ENCODE measurements at regions of chr2 and their contacts with region 1.

Region 1: GRCh38 chr2:106085181-106085940 is 108.7 kb downstream of the UXS1 start:
- DNase-seq: peak in 7 of 9 donors; percentile 57 to 76 (median 70)
- ATAC-seq: peak; percentile 90
- H3K4me3 ChIP-seq: peak overlapping the region; percentile 6
- H3K4me3 Mint-ChIP-seq: peak overlapping the region; percentile 47 to 83 (median 69)
- H3K27ac ChIP-seq: peak overlapping the region; percentile 64
- H3K27ac Mint-ChIP-seq: peak overlapping the region; percentile 79 to 97 (median 93)
- H3K4me1 ChIP-seq: peaks cover 37 to 59% of the 10 kb centered on the region in 2 donors
- H3K4me1 Mint-ChIP-seq: peaks cover 27 to 97% (median 76%) of the 10 kb centered on the region in 7 donors
- H3K27me3 ChIP-seq: no peaks in the 10 kb centered on the region
- H3K27me3 Mint-ChIP-seq: peaks cover 0 to 6% (median 0%) of the 10 kb centered on the region in 5 donors

Region 2: DNA sequence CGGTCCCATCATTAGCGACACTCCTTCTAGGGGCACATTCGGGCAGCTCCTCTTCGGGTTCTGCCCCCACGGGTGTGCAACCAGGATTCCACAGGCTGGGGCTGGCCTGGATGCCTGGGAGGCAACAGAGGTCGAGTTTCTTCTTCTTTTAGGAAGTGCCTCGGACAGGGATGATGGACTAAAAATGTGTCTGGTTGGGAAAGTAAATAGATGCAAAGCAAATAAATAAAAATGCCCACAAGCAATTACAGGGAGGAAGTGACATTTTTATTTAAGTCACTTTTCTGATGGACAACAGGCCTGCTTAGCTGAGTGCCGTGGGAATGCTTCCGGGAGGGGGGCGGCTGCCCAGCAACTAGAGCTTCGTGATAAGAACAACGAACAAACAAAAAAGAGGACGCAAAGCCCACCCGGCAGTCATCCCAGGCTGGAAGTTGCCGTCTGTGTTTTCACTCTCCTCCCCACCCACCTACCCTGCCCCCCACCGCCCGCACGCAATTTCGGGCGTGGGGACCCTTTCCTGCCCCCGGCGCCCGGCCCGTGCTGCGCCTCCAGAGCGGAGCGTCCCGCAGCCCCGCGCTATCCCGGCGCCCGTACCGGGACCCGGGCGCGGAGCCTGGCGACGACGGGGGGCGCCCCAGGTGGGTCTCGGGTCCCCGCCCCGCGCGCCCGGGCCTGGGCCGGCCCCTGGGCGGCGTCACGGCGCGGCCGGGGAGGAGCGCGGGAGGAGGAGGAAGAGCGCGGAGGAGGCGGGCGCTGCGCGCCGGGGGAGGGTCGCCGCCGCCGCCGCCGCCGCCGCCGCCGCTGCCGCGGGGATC is 341.1 kb before region 1 on chr2:
- CTCF ChIA-PET with region 1: interaction called, 3 read pairs
- POLR2A ChIA-PET with region 1: interaction called, 7 read pairs
- intact Hi-C with region 1: loop called in 1 of 2 experiments (anchors 1 kb)
- DNase-seq: peak; percentile 57 to 79 (median 69)
- ATAC-seq: peak; percentile 87
- H3K4me3 ChIP-seq: peak overlapping the region; percentile 24
- H3K4me3 Mint-ChIP-seq: peak overlapping the region; percentile 76 to 96 (median 90)
- H3K27ac ChIP-seq: peak overlapping the region; percentile 80
- H3K27ac Mint-ChIP-seq: peak overlapping the region; percentile 90 to 96 (median 95)
- H3K4me1 ChIP-seq: peaks cover 48 to 54% of the 10 kb centered on the region in 2 donors
- H3K4me1 Mint-ChIP-seq: peaks cover 49 to 82% (median 77%) of the 10 kb centered on the region in 7 donors
- H3K27me3 ChIP-seq: no peaks in the 10 kb centered on the region
- H3K27me3 Mint-ChIP-seq: no peaks in the 10 kb centered on the region

Region 3: DNA sequence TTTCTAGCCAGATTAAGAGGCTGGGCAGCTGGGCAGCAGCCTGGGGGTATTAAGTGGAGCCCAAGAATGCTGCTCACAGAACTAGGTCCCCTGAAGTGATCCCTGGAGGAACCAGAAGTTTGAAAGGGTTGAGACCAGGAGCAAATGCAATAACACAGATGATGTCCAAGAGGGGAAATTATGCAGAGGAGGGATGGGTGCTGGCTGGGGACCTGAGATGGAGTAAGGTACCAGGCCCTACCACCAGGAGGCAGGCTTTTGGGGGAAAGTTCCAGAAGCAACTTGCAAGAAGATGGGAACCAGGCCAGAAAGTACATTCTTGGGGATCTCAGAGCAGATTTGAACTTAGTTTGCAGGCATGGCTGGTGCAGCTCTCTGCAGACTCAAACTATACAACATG is 165.5 kb before region 1 on chr2:
- CTCF ChIA-PET with region 1: interaction called, 6 read pairs
- POLR2A ChIA-PET with region 1: no interaction called
- intact Hi-C with region 1: loop called (anchors 1 kb)
- DNase-seq: peak in 6 of 9 donors; percentile 33 to 52 (median 43)
- ATAC-seq: peak; percentile 40
- H3K4me3 ChIP-seq: no peak overlapping the region
- H3K4me3 Mint-ChIP-seq: peak overlapping the region in 2 of 10 donors; percentile 6 to 29
- H3K27ac ChIP-seq: no peak overlapping the region
- H3K27ac Mint-ChIP-seq: peak overlapping the region in 4 of 9 donors; percentile 8 to 68 (median 36)
- H3K4me1 ChIP-seq: peaks cover 0 to 26% of the 10 kb centered on the region in 2 donors
- H3K4me1 Mint-ChIP-seq: peaks cover 13 to 72% (median 65%) of the 10 kb centered on the region in 7 donors
- H3K27me3 ChIP-seq: no peaks in the 10 kb centered on the region
- H3K27me3 Mint-ChIP-seq: no peaks in the 10 kb centered on the region

Region 4: DNA sequence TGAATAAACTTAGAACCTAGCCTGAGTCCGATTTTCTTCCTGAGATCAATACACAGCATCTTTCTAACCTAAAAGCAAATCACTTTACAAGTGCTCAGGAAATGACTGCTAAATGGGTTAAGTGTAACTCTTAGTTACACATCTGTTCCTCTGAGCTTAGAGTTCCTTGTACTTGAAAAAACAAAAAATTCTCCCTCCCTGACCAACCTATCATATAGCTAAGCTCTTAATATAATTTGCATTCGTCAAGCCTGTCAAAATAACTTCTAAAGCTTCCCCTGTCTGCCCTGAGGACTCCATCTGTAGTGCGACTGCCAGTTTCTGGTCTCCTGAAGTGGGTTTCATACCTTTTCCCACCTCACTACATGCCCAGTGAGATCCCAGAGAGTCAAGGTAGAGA is 150.3 kb before region 1 on chr2:
- CTCF ChIA-PET with region 1: interaction called, 6 read pairs
- POLR2A ChIA-PET with region 1: interaction called, 5 read pairs
- intact Hi-C with region 1: loop called in 1 of 2 experiments (anchors 1 kb)
- DNase-seq: peak in 7 of 9 donors; percentile 40 to 73 (median 62)
- ATAC-seq: peak; percentile 86
- H3K4me3 ChIP-seq: peak overlapping the region; percentile 19
- H3K4me3 Mint-ChIP-seq: no peak overlapping the region
- H3K27ac ChIP-seq: peak overlapping the region; percentile 68
- H3K27ac Mint-ChIP-seq: no peak overlapping the region
- H3K4me1 ChIP-seq: peaks cover 39 to 54% of the 10 kb centered on the region in 2 donors
- H3K4me1 Mint-ChIP-seq: peaks cover 9 to 40% (median 30%) of the 10 kb centered on the region in 7 donors
- H3K27me3 ChIP-seq: no peaks in the 10 kb centered on the region
- H3K27me3 Mint-ChIP-seq: no peaks in the 10 kb centered on the region

Region 5: GRCh38 chr2:106028192-106028591 is 57.2 kb before region 1 on chr2:
- CTCF ChIA-PET with region 1: no interaction called
- POLR2A ChIA-PET with region 1: no interaction called
- intact Hi-C with region 1: no loop called
- DNase-seq: no peak
- ATAC-seq: peak; percentile 29
- H3K4me3 ChIP-seq: no peak overlapping the region
- H3K4me3 Mint-ChIP-seq: no peak overlapping the region
- H3K27ac ChIP-seq: no peak overlapping the region
- H3K27ac Mint-ChIP-seq: peak overlapping the region in 2 of 9 donors; percentile 4 to 54
- H3K4me1 ChIP-seq: peaks cover 16 to 17% of the 10 kb centered on the region in 2 donors
- H3K4me1 Mint-ChIP-seq: peaks cover 11 to 61% (median 45%) of the 10 kb centered on the region in 7 donors
- H3K27me3 ChIP-seq: no peaks in the 10 kb centered on the region
- H3K27me3 Mint-ChIP-seq: peaks cover 0 to 8% (median 0%) of the 10 kb centered on the region in 5 donors

Region 6: DNA sequence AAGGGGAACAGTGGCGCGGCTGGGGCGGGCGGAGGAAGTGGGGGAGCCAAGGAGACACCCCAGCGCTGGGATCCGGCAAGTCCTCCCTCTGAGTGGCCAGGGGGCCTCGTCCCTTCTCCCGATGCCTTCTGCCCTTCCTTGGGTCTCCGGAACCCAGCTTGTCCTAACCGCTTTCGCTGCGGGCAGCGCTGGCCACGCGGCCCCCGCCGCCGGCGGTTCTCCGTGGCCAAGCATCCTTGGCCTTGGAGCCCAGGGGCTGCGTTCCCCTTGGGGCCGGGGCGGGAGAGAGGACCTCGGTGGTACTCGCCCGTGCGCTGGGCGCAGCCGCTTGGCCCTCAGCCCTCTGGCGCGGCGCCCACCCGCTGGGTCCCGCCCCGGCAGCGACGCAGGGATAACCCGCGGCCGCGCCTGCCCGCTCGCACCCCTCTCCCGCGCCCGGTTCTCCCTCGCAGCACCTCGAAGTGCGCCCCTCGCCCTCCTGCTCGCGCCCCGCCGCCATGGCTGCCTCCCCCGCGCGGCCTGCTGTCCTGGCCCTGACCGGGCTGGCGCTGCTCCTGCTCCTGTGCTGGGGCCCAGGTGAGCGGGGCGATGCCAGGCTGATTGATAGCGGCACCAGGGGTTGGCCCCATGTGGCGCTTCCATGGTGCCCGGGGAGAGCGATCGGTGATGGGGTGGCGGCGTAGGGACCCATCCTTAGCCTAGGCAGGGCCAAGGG is 19.9 kb before region 1 on chr2:
- CTCF ChIA-PET with region 1: interaction called, 4 read pairs
- POLR2A ChIA-PET with region 1: interaction called, 11 read pairs
- intact Hi-C with region 1: no loop called
- DNase-seq: peak in 6 of 9 donors; percentile 17 to 44 (median 34)
- ATAC-seq: peak; percentile 57
- H3K4me3 ChIP-seq: peak overlapping the region; percentile 64
- H3K4me3 Mint-ChIP-seq: peak overlapping the region; percentile 61 to 88 (median 82)
- H3K27ac ChIP-seq: no peak overlapping the region
- H3K27ac Mint-ChIP-seq: peak overlapping the region in 7 of 9 donors; percentile 68 to 95 (median 73)
- H3K4me1 ChIP-seq: peaks cover 0 to 13% of the 10 kb centered on the region in 2 donors
- H3K4me1 Mint-ChIP-seq: peaks cover 4 to 45% (median 37%) of the 10 kb centered on the region in 7 donors
- H3K27me3 ChIP-seq: no peaks in the 10 kb centered on the region
- H3K27me3 Mint-ChIP-seq: peaks cover 0 to 42% (median 5%) of the 10 kb centered on the region in 5 donors